Motor neuron (in vitro differentiated cells): ENCODE measurements at regions of chr3 and their contacts with region 1.

Region 1: DNA sequence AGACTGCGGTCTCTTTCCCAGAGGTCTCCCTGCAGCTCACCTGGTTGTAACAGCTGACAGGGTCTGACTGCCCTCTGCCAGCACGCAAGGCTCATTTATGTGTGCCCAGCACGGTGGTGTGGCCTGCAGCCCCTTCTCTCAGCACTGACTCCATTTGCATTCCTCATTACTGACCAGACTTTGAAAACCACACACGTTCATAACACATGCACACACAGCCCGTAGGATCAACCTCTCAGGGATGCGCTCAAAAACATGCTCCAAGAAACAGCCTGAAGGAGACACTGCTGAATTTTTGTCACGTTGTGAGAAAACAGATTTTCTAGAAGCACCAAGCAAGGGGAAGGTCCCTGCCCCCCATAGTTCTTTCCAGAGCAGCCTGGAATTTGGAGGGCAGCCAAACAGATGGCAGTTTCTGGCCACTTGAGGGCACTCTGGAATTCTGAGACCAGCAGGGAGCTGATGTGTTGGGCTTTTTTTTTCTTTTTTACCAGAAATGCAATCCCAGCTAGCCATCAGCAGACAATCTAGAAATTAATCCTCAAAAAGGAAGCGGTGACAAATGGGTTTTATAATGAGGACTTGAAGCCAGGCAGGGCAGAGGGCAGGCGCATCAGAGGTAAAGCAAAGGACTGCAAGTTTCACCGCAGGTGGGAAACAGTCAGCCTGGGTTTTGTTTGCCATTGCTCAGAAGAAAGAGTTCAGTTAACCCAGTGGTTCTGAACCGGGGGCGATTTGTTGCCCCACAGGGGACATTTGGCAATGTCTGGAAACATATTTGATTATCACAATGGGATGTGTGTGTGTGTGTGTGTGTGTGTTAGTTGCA is 170.5 kb upstream of the PROK2 start:
- ATAC-seq: peak; percentile 72 to 95 (median 90)
- H3K4me3 ChIP-seq: no peak overlapping the region
- H3K27ac ChIP-seq: no peak overlapping the region
- H3K4me1 ChIP-seq: peaks cover 8 to 12% of the 10 kb centered on the region in 2 donors

Region 2: GRCh38 chr3:71380096-71380495 is 575.4 kb before region 1 on chr3:
- in situ Hi-C with region 1: no loop called
- ATAC-seq: peak in 2 of 8 experiments; percentile 24 to 32
- H3K4me3 ChIP-seq: no peak overlapping the region
- H3K27ac ChIP-seq: no peak overlapping the region
- H3K4me1 ChIP-seq: peaks cover 5 to 9% of the 10 kb centered on the region in 2 donors

Region 3: DNA sequence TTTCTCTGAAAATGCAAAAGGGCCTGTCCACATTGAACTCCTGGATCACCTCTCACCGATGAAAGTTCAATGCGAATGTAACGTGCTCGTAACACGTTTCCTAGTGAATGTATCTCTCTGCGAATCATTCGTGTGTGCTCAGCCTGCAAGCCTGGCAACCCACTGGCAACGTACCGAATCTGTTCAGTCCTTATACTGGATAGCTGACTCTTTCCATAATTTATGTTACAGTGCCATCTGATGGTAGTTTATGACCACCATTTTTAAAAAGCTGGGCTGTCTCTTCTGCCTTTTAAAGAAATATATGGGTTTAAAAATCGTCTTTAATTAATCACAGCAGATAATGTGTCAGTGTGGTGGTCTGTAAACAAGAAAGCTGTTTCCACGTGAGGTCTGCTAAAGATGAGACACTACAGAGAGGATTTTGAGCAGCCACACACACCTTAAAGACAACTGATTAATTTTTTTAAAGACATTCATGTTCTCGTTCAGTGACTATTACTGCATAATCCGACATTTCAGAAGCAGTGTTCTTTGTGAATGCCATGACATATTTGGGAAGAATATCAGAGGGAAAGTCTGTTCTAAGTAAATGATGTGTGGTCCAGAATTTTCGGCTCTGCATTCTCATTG is 302.6 kb before region 1 on chr3:
- in situ Hi-C with region 1: no loop called
- ATAC-seq: peak; percentile 67 to 92 (median 77)
- H3K4me3 ChIP-seq: no peak overlapping the region
- H3K27ac ChIP-seq: no peak overlapping the region
- H3K4me1 ChIP-seq: peaks cover 5 to 17% of the 10 kb centered on the region in 2 donors

Region 4: GRCh38 chr3:71796290-71796689 is 159.2 kb before region 1 on chr3:
- in situ Hi-C with region 1: no loop called
- ATAC-seq: no peak
- H3K4me3 ChIP-seq: no peak overlapping the region
- H3K27ac ChIP-seq: no peak overlapping the region
- H3K4me1 ChIP-seq: no peaks in the 10 kb centered on the region

Region 5: DNA sequence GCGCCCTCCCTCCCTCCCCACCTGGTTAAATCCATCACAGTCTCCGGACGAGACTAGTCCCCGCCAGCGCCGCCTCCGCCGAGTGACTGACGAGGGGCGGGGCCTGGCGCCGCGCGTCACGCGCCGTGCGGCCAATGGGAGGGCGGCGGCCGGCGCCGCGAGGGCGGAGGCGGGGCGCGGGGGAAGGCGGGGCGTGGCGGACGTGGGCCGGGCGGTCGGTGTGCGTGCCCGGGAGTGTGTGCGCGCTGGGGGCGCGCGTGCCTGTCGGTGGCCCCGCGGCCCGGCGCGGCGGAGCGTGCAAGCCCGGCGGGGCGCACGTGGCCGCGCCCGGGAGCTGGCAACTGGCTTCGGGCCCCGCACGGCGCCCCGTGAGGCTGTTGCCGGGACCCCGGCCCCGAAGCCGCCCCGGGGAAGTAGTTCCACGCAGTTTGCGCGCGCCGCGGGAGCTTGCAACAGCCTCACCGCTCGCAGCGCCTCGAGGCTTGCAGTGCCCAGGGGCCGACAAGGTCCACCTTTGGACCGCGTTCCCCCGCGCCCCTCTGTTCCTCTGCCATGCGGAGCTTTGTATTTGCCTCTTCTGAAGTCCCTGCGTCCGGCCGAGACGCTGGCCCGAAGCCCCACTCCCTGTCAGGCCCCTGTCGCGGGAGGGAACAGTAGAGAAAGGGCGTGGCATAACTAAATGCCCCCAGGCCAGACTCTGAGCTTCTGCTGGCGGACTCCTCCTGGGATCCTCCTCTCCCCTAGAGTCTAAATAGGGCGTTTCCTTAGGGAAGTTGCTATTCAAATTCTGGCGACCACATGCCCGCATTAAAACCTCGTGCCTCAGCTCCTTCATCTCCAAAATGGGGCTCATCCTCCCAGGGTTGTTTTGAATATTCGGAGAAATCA is 491.8 kb after region 1 on chr3:
- in situ Hi-C with region 1: loop called in 1 of 9 experiments (anchors 25 kb)
- ATAC-seq: peak; percentile 85 to 95 (median 90)
- H3K4me3 ChIP-seq: peak overlapping the region; percentile 59 to 97 (median 64)
- H3K27ac ChIP-seq: peak overlapping the region in 1 of 2 donors; percentile 64
- H3K4me1 ChIP-seq: peaks cover 29 to 31% of the 10 kb centered on the region in 2 donors